ENCODE measurements at regions of chr1 and their contacts with region 1.

Region 1: GRCh38 chr1:232630047-232630893 is at the start of gene SIPA1L2:
- DNase-seq: peak; percentile 73
- H3K4me3 ChIP-seq: peak within 1 kb of the TSS; percentile 81
- H3K27ac ChIP-seq: peak within 1 kb of the TSS; percentile 71
- H3K27me3 ChIP-seq: no peaks in the 10 kb centered on the region
- CTCF ChIP-seq: peak; percentile 72
- polyA plus RNA-seq, gene SIPA1L2: 63.5 and 65.0 TPM in 2 replicates

Region 2: GRCh38 chr1:231866392-231867331 is 763.6 kb before region 1 on chr1:
- CTCF ChIA-PET with region 1: interaction called, 19 read pairs
- POLR2A ChIA-PET with region 1: interaction called, 3 read pairs
- DNase-seq: no peak
- H3K4me3 ChIP-seq: no peak overlapping the region
- H3K27ac ChIP-seq: no peak overlapping the region
- H3K27me3 ChIP-seq: no peaks in the 10 kb centered on the region
- CTCF ChIP-seq: peak; percentile 79

Region 3: DNA sequence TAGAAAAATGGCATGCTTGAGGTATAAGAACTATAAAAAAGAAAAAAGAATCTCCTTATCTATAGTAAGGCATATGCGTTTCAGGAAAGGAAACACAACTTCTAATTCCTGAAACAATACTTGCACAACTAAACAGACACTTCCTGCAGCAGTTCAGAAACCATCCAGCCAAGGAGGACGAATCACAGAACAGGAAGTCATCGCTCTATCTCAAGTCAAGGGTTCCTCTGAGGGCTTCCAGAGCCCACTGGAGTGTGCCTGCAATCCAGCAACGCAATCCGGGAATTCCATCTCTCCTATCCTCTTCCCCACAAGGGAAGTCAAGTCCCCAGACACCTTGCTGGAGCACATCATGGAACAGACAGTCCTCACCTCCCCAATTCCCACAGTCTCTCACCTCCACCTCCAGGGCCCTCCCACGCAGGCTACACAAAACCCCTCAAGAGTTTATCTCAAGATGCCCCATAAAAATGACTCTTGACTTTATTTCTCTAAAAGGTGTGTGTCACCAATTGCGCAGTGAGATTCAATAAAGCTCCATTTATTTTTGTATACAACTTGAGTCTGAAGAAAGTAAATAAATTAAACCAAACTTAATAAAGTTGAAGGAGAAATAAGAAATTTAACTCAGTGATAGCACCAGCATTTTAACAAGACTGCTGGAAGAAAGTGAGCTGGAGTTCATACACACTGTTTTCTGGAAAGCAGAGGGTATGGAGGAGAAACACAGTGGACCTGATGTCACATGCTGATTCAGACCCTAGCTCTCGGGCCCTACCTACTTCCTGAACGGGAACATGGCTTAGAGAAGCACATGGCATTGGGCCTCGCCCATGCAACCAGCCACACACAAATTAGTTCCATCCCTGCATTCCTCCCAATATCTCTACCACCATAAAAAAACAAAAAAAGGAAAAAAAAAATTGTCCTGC is 40.2 kb before region 1 on chr1:
- CTCF ChIA-PET with region 1: no interaction called
- POLR2A ChIA-PET with region 1: no interaction called
- DNase-seq: no peak
- H3K4me3 ChIP-seq: no peak overlapping the region
- H3K27ac ChIP-seq: no peak overlapping the region
- H3K27me3 ChIP-seq: no peaks in the 10 kb centered on the region
- CTCF ChIP-seq: no peak

Region 4: DNA sequence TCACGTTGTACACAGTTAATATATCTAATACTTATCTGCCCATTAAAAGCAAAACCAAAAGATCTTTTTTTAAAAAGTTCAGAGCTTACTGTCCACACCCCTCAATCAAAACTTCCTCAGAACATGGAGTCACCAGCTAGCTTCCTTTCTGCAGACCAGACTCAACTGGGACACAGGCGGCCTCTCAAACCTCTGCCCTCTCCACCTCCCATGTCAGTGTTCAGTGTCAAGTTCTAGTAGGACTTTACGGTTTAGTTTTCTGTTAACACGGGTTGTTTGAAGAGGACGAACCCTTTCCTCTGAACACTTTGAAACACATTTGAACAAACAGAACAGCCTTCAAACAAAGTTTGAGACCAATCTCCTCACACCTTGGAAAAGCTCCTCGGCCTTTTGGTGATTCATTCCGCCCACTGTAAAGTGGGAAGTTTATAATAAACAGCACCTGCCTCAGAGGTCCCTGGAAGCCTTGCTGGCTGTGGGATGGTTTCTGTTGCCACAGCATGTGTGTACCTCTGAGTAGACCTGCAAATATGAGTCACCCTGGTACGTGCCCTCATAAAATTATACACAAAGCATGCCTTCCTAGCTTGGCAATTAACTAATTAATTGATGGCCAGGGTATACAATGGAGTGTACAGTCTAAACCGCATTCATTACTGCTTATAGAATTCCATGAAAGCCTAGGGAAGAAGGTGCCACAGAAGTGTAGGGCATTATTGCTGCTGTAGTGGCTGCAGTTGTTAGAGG is 48.1 kb after region 1 on chr1:
- CTCF ChIA-PET with region 1: no interaction called
- POLR2A ChIA-PET with region 1: no interaction called
- DNase-seq: no peak
- H3K4me3 ChIP-seq: no peak overlapping the region
- H3K27ac ChIP-seq: peak overlapping the region; percentile 13
- H3K27me3 ChIP-seq: no peaks in the 10 kb centered on the region
- CTCF ChIP-seq: no peak

Region 5: GRCh38 chr1:232767305-232768074 is 137.2 kb after region 1 on chr1:
- CTCF ChIA-PET with region 1: no interaction called
- POLR2A ChIA-PET with region 1: no interaction called
- DNase-seq: peak; percentile 10
- H3K4me3 ChIP-seq: no peak overlapping the region
- H3K27ac ChIP-seq: no peak overlapping the region
- H3K27me3 ChIP-seq: no peaks in the 10 kb centered on the region
- CTCF ChIP-seq: no peak

Region 6: GRCh38 chr1:233238884-233239431 is 608.7 kb after region 1 on chr1:
- CTCF ChIA-PET with region 1: interaction called, 12 read pairs
- POLR2A ChIA-PET with region 1: no interaction called
- DNase-seq: no peak
- H3K4me3 ChIP-seq: no peak overlapping the region
- H3K27ac ChIP-seq: no peak overlapping the region
- H3K27me3 ChIP-seq: no peaks in the 10 kb centered on the region
- CTCF ChIP-seq: 0 out of 2 replicates have a peak, but pooled peaks have one; percentile 18